ENCODE measurements at regions of chr16 and their contacts with region 1.

Region 1: DNA sequence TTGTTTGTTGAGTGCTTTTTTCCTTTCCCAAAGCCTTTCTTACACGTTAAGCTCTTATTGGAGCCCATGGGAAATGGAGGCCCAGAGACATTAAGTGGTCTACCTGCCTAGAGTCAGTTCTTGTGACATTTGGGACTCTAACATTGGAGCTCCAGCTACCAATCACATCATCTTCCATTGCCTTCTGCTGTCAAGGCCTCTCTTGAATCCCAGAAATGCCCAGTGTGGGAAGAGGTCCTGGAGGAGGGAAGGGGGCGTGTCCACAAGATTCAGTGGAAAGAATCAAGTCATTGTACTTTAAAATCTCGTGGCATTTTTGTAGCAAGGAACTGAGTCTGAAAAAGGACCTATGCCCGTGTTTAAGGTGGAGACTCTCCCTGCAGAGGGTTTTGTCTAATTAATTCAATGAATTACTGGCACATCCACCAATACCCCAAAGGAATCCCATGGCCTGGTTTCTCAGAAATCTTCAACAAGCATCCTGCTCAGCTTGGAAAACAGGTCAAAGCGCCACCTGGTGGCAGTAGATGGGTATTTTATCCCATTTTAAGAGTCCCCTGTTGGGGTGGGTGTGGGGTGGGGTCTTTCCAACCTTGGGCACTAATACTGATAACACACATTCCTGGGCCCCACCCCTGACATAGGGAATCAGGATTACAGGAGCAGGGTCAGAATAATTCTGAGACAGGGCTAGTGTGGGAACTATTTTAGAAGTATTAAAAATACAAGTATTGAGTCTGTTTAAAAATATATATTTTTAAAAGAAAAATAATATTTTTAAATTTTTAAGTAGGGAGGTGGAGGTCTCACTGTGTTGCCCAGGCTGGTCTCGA is 24.6 kb downstream of the GPT2 start:
- DNase-seq: peak; percentile 41 to 66 (median 56)
- H3K4me3 ChIP-seq: no peak overlapping the region
- H3K27ac ChIP-seq: no peak overlapping the region
- H3K4me1 ChIP-seq: no peaks in the 10 kb centered on the region
- H3K27me3 ChIP-seq: no peaks in the 10 kb centered on the region
- CTCF ChIP-seq: peak; percentile 43 to 60 (median 55)
- EP300 ChIP-seq: no peak
- POLR2A ChIP-seq: no peak

Region 2: DNA sequence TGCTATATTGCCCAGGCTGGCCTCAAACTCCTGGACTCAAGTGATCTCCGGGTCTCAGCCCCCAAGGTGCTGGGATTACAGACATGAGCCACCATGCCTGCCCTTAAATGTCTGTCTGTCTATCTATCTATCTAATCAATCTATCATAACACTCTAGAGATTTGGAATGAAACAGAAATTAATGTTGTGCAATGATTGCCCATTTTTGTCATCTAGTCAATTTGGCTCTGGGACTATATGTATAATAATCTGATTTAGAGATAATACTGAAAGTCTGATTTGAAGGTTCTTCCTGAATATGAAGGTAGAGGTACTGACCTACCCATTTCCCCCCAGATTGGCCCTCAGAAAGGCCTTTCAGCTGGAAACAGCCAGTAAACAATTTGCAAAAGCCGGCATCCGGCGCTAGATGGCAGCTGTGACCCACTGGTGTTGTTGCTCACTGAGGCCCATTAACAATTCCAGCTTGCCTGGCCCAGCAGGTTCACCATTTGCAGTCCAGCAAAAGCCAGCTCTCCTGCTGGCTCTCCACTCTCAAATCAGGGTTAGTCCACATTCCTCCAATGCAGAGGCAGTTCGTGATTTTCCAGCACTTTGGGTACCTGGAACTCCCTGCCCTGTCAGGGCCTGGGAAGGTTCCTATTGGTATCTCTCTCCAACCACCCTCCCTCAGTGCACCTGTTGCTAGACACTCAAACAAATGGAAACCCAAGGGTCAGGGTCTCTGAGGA is 54.9 kb before region 1 on chr16:
- intact Hi-C with region 1: loop called (anchors 2 to 5 kb)
- DNase-seq: peak; percentile 64 to 88 (median 78)
- H3K4me3 ChIP-seq: no peak overlapping the region
- H3K27ac ChIP-seq: no peak overlapping the region
- H3K4me1 ChIP-seq: no peaks in the 10 kb centered on the region
- H3K27me3 ChIP-seq: no peaks in the 10 kb centered on the region
- CTCF ChIP-seq: peak; percentile 47 to 64 (median 59)
- EP300 ChIP-seq: no peak
- POLR2A ChIP-seq: no peak

Region 3: DNA sequence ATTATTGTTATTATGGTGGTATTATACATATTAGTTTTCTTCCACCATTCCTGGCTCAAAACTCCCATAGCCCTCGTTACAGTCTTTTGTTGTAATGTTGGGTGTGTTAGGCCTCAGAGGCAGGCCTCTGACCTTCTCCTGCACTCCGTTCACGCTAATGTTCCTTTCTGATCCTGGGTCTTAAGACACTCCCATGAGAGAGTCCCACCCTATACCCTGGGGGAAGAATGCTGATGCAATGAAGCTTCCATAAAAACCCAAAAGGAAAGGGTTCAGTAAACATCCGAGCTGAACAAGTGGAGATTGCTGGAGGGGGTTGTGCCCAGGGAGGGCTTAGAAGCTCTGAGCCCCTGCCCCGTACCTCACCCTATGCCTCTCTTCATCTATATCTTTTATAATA is 376.2 kb after region 1 on chr16:
- intact Hi-C with region 1: no loop called
- DNase-seq: no peak
- H3K4me3 ChIP-seq: no peak overlapping the region
- H3K27ac ChIP-seq: no peak overlapping the region
- H3K4me1 ChIP-seq: no peaks in the 10 kb centered on the region
- H3K27me3 ChIP-seq: no peaks in the 10 kb centered on the region
- CTCF ChIP-seq: no peak
- EP300 ChIP-seq: no peak
- POLR2A ChIP-seq: no peak

Measured in ovary (tissue), 10 donors.